ENCODE measurements at regions of chr7 and their contacts with region 1.

Region 1: GRCh38 chr7:43454936-43455518 is 127.9 kb upstream of the STK17A start:
- DNase-seq: no peak
- H3K4me3 Mint-ChIP-seq: no peak overlapping the region
- H3K27ac Mint-ChIP-seq: no peak overlapping the region
- H3K4me1 Mint-ChIP-seq: no peaks in the 10 kb centered on the region
- H3K27me3 Mint-ChIP-seq: peaks cover 5% of the 10 kb centered on the region

Region 2: GRCh38 chr7:43439631-43440401 is 15.2 kb before region 1 on chr7:
- CTCF ChIA-PET with region 1: interaction called, 31 read pairs
- DNase-seq: peak; percentile 71
- H3K4me3 Mint-ChIP-seq: no peak overlapping the region
- H3K27ac Mint-ChIP-seq: no peak overlapping the region
- H3K4me1 Mint-ChIP-seq: no peaks in the 10 kb centered on the region
- H3K27me3 Mint-ChIP-seq: peaks cover 14% of the 10 kb centered on the region

Region 3: DNA sequence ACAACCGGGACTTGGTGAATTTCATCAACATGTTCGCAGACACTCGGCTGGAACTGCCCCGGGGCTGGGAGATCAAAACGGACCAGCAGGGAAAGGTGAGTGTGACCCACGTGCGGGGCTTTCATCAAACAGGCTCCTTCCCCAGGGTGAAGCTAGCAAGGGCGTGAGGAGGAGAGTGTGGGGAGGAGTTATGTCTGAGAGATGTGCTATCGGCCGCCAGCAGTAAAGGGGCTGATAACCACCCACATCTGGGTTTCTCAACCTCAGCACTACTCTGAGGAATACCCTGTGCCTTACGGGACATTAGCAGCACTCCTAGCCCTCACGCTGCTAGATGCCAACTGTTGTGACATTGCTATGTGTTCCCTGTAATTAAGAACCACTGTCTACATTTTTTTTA is 14.0 kb after region 1 on chr7:
- CTCF ChIA-PET with region 1: interaction called, 18 read pairs
- DNase-seq: no peak
- H3K4me3 Mint-ChIP-seq: no peak overlapping the region
- H3K27ac Mint-ChIP-seq: no peak overlapping the region
- H3K4me1 Mint-ChIP-seq: no peaks in the 10 kb centered on the region
- H3K27me3 Mint-ChIP-seq: peaks cover 28% of the 10 kb centered on the region

Region 4: DNA sequence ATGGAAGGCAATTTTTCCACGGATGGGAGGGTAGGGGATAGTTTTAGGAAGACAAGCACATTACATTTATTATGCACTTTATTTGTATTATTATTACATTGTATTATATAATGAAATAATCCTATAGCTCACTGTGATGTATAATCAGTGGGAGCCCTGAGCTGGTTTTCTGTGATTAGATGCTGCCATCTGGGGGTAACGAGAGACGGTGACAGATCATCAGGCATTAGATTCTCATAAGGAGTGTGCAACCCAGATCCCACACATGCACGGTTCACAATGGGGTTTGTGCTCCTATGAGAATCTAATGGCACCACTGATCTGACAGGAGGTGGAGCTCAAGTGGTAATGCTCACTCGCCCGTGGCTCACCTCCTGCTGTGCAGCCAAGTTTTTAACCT is 24.0 kb after region 1 on chr7:
- CTCF ChIA-PET with region 1: no interaction called
- DNase-seq: no peak
- H3K4me3 Mint-ChIP-seq: no peak overlapping the region
- H3K27ac Mint-ChIP-seq: no peak overlapping the region
- H3K4me1 Mint-ChIP-seq: peaks cover 2% of the 10 kb centered on the region
- H3K27me3 Mint-ChIP-seq: peaks cover 10% of the 10 kb centered on the region

Measured in activated naive CD4-positive, alpha-beta T cell treated with anti-CD3 and anti-CD28 coated beads, Interleukin-2, amount 10 ng/mL, durations not matched to agents 7 days and 5 days (primary cell).